Prostate gland (tissue), 2 donors: ENCODE measurements at regions of chr18 and their contacts with region 1.

Region 1: GRCh38 chr18:63177919-63178821 is 141.4 kb downstream of the BCL2 start:
- DNase-seq: peak; percentile 73
- H3K4me3 ChIP-seq: peak overlapping the region in 1 of 2 donors; percentile 2
- H3K27ac ChIP-seq: peak overlapping the region; percentile 79 to 80
- H3K4me1 ChIP-seq: peaks cover 6% of the 10 kb centered on the region
- H3K27me3 ChIP-seq: no peaks in the 10 kb centered on the region
- CTCF ChIP-seq: no peak
- POLR2A ChIP-seq: no peak

Region 2: GRCh38 chr18:63025251-63026090 is 152.7 kb before region 1 on chr18:
- intact Hi-C with region 1: no loop called
- DNase-seq: peak; percentile 17
- H3K4me3 ChIP-seq: no peak overlapping the region
- H3K27ac ChIP-seq: no peak overlapping the region
- H3K4me1 ChIP-seq: no peaks in the 10 kb centered on the region
- H3K27me3 ChIP-seq: no peaks in the 10 kb centered on the region
- CTCF ChIP-seq: peak in 2 of 4 experiments; percentile 39 to 46
- POLR2A ChIP-seq: no peak

Region 3: DNA sequence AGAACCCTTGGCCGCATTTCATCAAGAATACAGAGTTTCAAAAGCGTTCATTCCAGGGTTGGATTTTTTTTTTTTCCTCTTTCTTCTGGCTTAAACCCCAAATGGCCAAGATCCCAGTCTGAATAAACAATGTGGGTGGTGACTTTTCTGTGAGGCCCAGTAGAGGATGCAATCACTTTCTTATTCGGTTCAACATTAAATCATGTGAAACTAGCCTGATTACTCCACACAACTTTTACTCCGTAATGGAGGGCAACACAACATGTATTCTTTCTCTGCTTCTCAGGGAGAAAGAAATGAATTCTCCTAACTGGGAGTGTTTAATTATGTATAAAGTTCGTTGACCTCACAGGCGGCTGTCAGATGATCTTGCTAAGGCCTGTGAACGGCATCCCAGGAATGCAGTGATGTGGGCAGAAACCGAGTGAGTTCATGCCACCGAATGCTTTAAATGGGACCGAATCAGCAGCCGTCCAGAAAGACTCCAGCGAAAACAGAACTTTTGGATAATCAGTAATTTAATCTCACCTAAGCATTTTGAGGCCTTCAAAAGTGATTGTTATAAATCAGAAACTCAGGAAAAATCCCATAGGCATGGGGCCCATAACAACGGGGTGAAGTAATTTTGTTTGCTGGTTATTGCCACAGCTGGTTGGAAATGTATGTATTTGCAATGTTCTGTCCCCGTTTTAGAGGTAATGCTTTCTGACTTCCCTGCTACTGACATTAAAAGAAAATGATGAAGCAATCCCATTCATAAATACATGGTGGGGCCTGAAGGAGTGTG is 59.9 kb after region 1 on chr18:
- intact Hi-C with region 1: loop called (anchors 5 kb)
- DNase-seq: peak; percentile 56
- H3K4me3 ChIP-seq: no peak overlapping the region
- H3K27ac ChIP-seq: peak overlapping the region; percentile 58 to 84
- H3K4me1 ChIP-seq: no peaks in the 10 kb centered on the region
- H3K27me3 ChIP-seq: no peaks in the 10 kb centered on the region
- CTCF ChIP-seq: no peak
- POLR2A ChIP-seq: peak; percentile 43

Region 4: GRCh38 chr18:63267975-63268721 is 90.0 kb after region 1 on chr18:
- intact Hi-C with region 1: no loop called
- DNase-seq: no peak
- H3K4me3 ChIP-seq: no peak overlapping the region
- H3K27ac ChIP-seq: no peak overlapping the region
- H3K4me1 ChIP-seq: no peaks in the 10 kb centered on the region
- H3K27me3 ChIP-seq: no peaks in the 10 kb centered on the region
- CTCF ChIP-seq: no peak
- POLR2A ChIP-seq: no peak

Region 5: DNA sequence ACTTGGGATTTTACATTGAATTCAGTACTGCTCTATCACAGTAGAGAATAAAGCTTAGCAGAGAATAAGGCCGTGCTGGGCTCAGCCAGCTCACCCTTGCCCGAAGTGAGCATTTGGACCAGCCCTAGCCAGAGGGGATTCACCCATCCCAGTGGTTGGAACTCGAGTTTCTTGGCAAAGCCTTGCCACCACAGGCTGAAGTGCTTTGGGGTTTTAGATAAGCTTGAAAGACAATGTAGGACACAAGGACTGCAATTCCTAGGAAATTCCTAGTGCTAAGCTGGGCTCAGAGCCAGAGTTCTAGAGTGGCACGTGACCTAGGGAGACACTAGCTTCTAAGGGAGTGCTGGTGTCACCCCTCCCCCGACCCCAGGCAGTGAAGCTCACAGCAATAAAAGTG is 552.6 kb after region 1 on chr18:
- intact Hi-C with region 1: no loop called
- DNase-seq: no peak
- H3K4me3 ChIP-seq: no peak overlapping the region
- H3K27ac ChIP-seq: no peak overlapping the region
- H3K4me1 ChIP-seq: peaks cover 4% of the 10 kb centered on the region
- H3K27me3 ChIP-seq: no peaks in the 10 kb centered on the region
- CTCF ChIP-seq: no peak
- POLR2A ChIP-seq: no peak